Heart right ventricle (tissue), 16 donors: ENCODE measurements at regions of chr7 and their contacts with region 1.

Region 1: GRCh38 chr7:106793015-106793975 is 71.8 kb upstream of the PIK3CG start:
- DNase-seq: no peak
- ATAC-seq: no peak
- H3K4me3 ChIP-seq: no peak overlapping the region
- H3K27ac ChIP-seq: no peak overlapping the region
- H3K4me1 ChIP-seq: no peaks in the 10 kb centered on the region
- H3K27me3 ChIP-seq: peaks cover 0 to 2% (median 0%) of the 10 kb centered on the region in 7 donors
- CTCF ChIP-seq: peak in 8 of 9 donors; percentile 46 to 74 (median 64)

Region 2: DNA sequence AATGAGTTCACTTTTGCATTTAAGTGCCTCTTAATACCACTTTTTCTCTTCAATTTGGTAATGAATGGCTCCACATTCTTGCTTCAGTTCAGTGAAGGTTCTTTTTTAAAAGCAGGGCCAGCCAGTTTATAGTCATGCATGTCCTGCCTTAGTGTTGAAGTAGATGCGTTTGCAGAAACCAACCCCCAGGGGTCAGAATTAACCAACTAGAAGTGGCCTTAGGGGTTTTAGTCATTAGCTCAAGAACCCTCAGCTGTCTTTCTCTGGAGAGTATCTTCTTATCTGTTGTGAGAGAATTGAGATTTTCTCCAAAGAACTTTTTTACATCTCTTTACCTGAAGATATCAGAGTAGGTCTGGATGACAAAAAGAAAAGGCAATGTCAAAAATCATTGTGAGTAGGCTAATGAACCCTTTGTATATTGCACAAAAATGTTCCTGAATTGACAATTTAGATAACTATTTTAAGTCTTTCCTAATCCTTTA is 154.0 kb after region 1 on chr7:
- intact Hi-C with region 1: loop called in 6 of 10 experiments (anchors 1 to 10 kb)
- DNase-seq: peak in 1 of 2 donors; percentile 56
- ATAC-seq: peak; percentile 59 to 93 (median 84)
- H3K4me3 ChIP-seq: no peak overlapping the region
- H3K27ac ChIP-seq: no peak overlapping the region
- H3K4me1 ChIP-seq: peaks cover 0 to 1% (median 0%) of the 10 kb centered on the region in 9 donors
- H3K27me3 ChIP-seq: no peaks in the 10 kb centered on the region
- CTCF ChIP-seq: peak; percentile 47 to 85 (median 74)